ENCODE measurements at regions of chr13 and their contacts with region 1.

Region 1: GRCh38 chr13:48902368-48902767 is 73.3 kb upstream of the FNDC3A start:
- DNase-seq: no peak
- H3K4me3 ChIP-seq: no peak overlapping the region
- H3K27ac ChIP-seq: no peak overlapping the region
- H3K4me1 ChIP-seq: no peaks in the 10 kb centered on the region
- H3K27me3 ChIP-seq: no peaks in the 10 kb centered on the region
- CTCF ChIP-seq: no peak
- EP300 ChIP-seq: no peak
- POLR2A ChIP-seq: no peak

Region 2: GRCh38 chr13:49098771-49099512 is 196.6 kb after region 1 on chr13:
- intact Hi-C with region 1: loop called (anchors 10 kb)
- DNase-seq: no peak
- H3K4me3 ChIP-seq: no peak overlapping the region
- H3K27ac ChIP-seq: peak overlapping the region; percentile 47 to 80 (median 72)
- H3K4me1 ChIP-seq: peaks cover 0 to 27% (median 22%) of the 10 kb centered on the region in 4 donors
- H3K27me3 ChIP-seq: no peaks in the 10 kb centered on the region
- CTCF ChIP-seq: peak in 2 of 4 experiments; percentile 8 to 11
- EP300 ChIP-seq: no peak
- POLR2A ChIP-seq: no peak

Measured in sigmoid colon (tissue), 7 donors.